Activated CD8-positive, alpha-beta T cell treated with anti-CD3 and anti-CD28 coated beads for 36 hours (primary cell): ENCODE measurements at regions of chr1 and their contacts with region 1.

Region 1: GRCh38 chr1:26035959-26036755 is 9.8 kb downstream of the SLC30A2 start:
- DNase-seq: peak; percentile 81
- ATAC-seq: peak; percentile 77
- H3K4me3 Mint-ChIP-seq: peak overlapping the region; percentile 91
- H3K27ac Mint-ChIP-seq: peak overlapping the region; percentile 72
- H3K4me1 Mint-ChIP-seq: peaks cover 14% of the 10 kb centered on the region
- H3K27me3 Mint-ChIP-seq: no peaks in the 10 kb centered on the region
- CTCF ChIP-seq: peak; percentile 100

Region 2: GRCh38 chr1:25858906-25859789 is 177.0 kb before region 1 on chr1 and contains the start of gene AUNIP:
- CTCF ChIA-PET with region 1: no interaction called
- POLR2A ChIA-PET with region 1: no interaction called
- intact Hi-C with region 1: no loop called
- DNase-seq: peak; percentile 95
- ATAC-seq: peak; percentile 98
- H3K4me3 Mint-ChIP-seq: peak within 1 kb of the TSS; percentile 98
- H3K27ac Mint-ChIP-seq: peak within 1 kb of the TSS; percentile 87
- H3K4me1 Mint-ChIP-seq: peaks cover 19% of the 10 kb centered on the region
- H3K27me3 Mint-ChIP-seq: no peaks in the 10 kb centered on the region
- CTCF ChIP-seq: no peak
- total RNA-seq, gene AUNIP: 8.8 to 10.3 TPM

Region 3: GRCh38 chr1:25927521-25928265 is 108.5 kb before region 1 on chr1:
- CTCF ChIA-PET with region 1: no interaction called
- POLR2A ChIA-PET with region 1: no interaction called
- intact Hi-C with region 1: no loop called
- DNase-seq: no peak
- ATAC-seq: no peak
- H3K4me3 Mint-ChIP-seq: no peak overlapping the region
- H3K27ac Mint-ChIP-seq: no peak overlapping the region
- H3K4me1 Mint-ChIP-seq: peaks cover 14% of the 10 kb centered on the region
- H3K27me3 Mint-ChIP-seq: peaks cover 6% of the 10 kb centered on the region
- CTCF ChIP-seq: no peak

Region 4: GRCh38 chr1:25958465-25958864 is 77.7 kb before region 1 on chr1:
- CTCF ChIA-PET with region 1: no interaction called
- POLR2A ChIA-PET with region 1: no interaction called
- intact Hi-C with region 1: no loop called
- DNase-seq: no peak
- ATAC-seq: no peak
- H3K4me3 Mint-ChIP-seq: no peak overlapping the region
- H3K27ac Mint-ChIP-seq: no peak overlapping the region
- H3K4me1 Mint-ChIP-seq: peaks cover 8% of the 10 kb centered on the region
- H3K27me3 Mint-ChIP-seq: no peaks in the 10 kb centered on the region
- CTCF ChIP-seq: no peak

Region 5: GRCh38 chr1:26053718-26054560 is 17.8 kb after region 1 on chr1:
- CTCF ChIA-PET with region 1: interaction called, 12 read pairs
- POLR2A ChIA-PET with region 1: interaction called, 3 read pairs
- intact Hi-C with region 1: no loop called
- DNase-seq: no peak
- ATAC-seq: no peak
- H3K4me3 Mint-ChIP-seq: no peak overlapping the region
- H3K27ac Mint-ChIP-seq: no peak overlapping the region
- H3K4me1 Mint-ChIP-seq: peaks cover 2% of the 10 kb centered on the region
- H3K27me3 Mint-ChIP-seq: peaks cover 35% of the 10 kb centered on the region
- CTCF ChIP-seq: no peak

Region 6: GRCh38 chr1:26077524-26077923 is 41.4 kb after region 1 on chr1:
- CTCF ChIA-PET with region 1: no interaction called
- POLR2A ChIA-PET with region 1: no interaction called
- intact Hi-C with region 1: no loop called
- DNase-seq: no peak
- ATAC-seq: no peak
- H3K4me3 Mint-ChIP-seq: no peak overlapping the region
- H3K27ac Mint-ChIP-seq: no peak overlapping the region
- H3K4me1 Mint-ChIP-seq: no peaks in the 10 kb centered on the region
- H3K27me3 Mint-ChIP-seq: peaks cover 15% of the 10 kb centered on the region
- CTCF ChIP-seq: no peak

Region 7: GRCh38 chr1:26102526-26102925 is 66.4 kb after region 1 on chr1:
- CTCF ChIA-PET with region 1: interaction called, 15 read pairs
- POLR2A ChIA-PET with region 1: no interaction called
- intact Hi-C with region 1: no loop called
- DNase-seq: no peak
- ATAC-seq: no peak
- H3K4me3 Mint-ChIP-seq: no peak overlapping the region
- H3K27ac Mint-ChIP-seq: no peak overlapping the region
- H3K4me1 Mint-ChIP-seq: peaks cover 3% of the 10 kb centered on the region
- H3K27me3 Mint-ChIP-seq: peaks cover 2% of the 10 kb centered on the region
- CTCF ChIP-seq: no peak